Right ventricle myocardium inferior (tissue), 1 donor: ENCODE measurements at regions of chr1 and their contacts with region 1.

Region 1: DNA sequence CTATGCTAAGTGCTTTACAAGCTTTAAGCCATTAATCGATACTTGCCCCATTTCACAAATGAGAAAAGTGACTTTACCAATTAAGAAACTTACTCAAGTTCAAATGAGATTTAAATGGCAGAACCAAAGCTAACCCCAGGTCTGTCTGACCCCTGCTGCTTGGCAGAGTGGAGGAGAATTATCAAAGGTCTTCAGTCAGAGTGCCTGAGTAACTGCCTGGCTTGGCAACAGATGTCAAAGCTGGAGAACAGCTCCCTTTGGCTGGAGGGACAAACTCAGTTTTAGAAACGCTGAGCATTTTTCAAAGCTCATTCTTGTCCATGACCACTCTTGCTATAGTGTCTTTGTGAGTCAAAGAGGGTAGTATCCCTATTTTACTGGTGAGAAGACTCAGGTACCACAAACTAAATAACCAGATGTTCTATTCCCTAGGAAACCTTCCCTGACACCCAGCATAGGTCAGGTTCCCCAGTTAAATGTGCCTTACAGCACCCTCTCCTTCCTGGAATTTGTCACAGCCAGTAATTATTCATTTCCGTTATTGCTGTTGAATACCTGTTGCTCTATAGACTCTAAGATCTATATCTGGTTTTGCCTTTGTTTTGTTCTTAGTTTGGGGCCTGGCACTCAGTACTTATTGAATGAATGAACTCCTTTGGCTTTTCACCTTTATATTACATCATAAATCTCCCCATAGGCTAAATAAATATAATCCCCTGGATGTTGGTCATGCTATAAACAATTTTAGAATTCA is 5.0 kb upstream of the BCAR3 start:
- DNase-seq: no peak
- ATAC-seq: no peak

Region 2: DNA sequence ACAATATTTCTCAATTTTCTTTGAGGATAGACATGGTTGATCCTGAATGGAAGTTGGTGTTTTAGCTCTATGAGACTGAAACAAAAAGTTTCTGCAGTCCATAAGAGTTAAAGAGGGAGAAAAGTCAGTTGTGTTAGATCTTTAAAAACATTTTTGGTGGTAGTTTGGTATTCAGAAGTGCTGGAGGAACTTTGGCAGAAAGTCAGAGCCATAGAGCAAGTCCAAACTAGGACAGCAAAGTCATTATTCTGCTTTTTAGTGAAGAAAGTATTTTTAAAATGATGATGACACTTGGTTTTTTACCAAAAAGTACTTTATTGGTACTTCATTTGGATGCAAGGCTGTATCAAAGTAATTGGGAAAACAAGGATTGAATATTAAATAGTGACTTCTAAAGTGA is 196.9 kb before region 1 on chr1:
- intact Hi-C with region 1: no loop called
- DNase-seq: no peak
- ATAC-seq: no peak

Region 3: GRCh38 chr1:93701619-93702018 is 14.9 kb after region 1 on chr1:
- intact Hi-C with region 1: loop called (anchors 1 kb)
- DNase-seq: no peak
- ATAC-seq: no peak

Region 4: DNA sequence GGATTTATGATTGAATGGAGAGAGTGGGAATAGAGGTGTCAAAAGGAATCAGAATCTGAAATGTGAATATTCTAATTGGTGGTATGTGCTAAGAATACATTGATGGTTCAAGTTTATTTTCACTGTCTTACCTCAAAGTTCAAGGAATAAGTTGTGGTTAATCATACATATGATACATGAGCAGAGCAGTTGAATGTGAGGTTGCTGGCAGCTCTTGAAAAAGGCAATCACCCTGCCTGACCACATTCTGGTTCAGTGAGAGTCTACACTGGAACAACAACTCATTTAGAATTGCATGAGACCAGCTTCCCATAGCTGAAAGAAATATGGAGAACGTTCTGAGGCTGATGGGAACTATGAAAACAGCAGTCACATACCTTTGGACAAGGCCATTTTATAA is 619.0 kb after region 1 on chr1:
- intact Hi-C with region 1: no loop called
- DNase-seq: no peak
- ATAC-seq: no peak